ENCODE measurements at regions of chr1 and their contacts with region 1.

Region 1: DNA sequence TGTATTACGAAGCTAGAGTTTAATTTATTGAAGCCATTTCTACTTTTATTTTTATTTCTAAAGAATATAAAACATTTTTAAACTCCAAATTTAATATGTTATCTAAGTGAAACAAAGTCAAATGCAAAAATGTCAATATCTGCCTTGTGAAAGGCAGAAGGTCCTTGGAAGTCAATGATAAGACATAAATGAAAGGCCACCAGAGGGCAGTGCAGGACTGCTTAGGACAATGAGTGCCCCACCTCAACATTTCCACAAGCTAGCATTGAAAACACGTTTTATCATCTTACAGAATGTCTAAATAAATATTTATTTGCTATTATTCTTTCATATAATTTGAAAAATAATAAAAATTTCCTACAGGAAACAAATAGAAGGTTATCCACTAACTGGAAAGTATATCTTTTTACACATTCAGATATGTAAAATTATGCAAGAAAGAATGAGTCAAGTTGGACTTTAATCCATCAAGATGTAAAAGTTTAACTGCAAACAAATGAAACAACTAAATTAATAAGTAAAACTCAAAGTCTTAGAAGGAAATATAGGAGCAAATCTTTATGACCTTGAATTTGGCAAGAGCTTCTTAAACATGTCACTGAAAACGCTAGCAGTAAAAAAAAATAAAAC is 140.1 kb upstream of the FMN2 start:
- DNase-seq: peak; percentile 38
- CTCF ChIP-seq: peak; percentile 61

Region 2: DNA sequence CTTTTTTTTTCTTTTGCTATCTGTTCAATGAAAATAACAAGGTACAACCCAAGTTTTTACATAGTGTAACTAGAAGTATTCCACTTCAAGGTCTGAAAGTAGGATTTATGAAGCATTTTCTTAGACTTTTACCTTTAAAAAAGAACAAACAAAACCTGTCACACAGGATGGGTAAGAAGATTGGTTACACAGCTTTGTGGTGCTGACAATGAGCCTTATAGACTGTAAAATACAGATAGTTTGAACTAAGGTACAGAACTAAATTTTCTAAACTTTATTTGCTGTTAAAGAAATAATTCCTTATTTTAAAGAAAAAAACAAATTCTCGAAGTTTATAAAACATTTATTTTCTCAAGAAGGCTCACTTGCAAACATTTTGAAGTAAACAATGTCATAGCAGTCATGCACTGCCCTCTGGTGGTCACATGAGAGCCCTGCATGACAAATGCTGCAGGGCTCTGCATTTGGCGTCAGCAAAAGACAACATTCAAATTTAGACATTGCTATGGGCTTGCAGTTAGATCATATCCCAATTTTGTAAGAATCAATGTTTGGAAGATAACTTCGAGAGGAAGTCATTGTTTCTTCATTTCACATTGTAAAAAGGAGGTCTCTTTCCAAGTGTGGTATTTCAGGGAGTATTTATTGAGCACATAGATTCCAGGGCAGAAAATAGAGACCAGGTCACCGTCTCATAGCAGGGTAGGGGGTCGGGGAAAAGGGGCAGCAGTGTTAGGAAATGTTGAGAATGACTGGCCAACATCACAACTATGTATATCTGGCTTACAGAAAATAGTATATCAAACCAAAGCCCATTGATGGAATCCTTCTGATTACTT is 24.7 kb after region 1 on chr1:
- CTCF ChIA-PET with region 1: interaction called, 22 read pairs
- POLR2A ChIA-PET with region 1: no interaction called
- DNase-seq: peak; percentile 46
- CTCF ChIP-seq: peak; percentile 98

Measured in GM10248 (cell line).